GM10248 (cell line): ENCODE measurements at regions of chr11 and their contacts with region 1.

Region 1: DNA sequence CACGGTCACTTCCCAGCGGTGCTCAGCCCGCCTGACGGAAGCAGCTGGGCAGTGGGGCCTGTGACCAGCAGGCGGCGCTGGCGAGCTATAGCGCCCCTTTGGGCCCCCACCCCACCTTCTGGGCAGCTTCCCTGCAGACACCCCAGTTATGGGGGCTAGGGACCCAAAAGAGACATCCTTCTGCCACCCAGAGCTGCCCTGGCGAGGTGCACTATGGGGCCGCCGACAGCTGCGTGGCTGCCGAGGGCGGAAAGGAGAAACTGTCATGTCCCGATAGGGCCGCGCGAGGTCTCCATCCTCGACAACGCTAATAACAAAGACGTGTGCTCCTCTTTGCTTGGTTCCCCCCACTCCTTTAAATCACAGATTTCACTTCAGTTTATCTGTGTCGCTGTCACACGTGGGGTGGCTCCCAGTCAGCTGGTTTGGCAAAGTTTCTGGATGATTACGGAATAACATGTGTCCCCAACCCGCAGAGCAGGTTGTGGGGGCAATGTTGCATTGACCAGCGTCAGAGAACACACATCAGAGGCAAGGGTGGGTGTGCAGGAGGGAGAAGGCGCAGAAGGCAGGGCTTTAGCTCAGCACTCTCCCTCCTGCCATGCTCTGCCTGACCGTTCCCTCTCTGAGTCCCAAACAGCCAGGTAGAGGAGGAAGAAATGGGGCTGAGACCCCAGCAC is 674 bp upstream of the MYO7A start:
- DNase-seq: peak; percentile 78
- CTCF ChIP-seq: peak; percentile 98

Region 2: DNA sequence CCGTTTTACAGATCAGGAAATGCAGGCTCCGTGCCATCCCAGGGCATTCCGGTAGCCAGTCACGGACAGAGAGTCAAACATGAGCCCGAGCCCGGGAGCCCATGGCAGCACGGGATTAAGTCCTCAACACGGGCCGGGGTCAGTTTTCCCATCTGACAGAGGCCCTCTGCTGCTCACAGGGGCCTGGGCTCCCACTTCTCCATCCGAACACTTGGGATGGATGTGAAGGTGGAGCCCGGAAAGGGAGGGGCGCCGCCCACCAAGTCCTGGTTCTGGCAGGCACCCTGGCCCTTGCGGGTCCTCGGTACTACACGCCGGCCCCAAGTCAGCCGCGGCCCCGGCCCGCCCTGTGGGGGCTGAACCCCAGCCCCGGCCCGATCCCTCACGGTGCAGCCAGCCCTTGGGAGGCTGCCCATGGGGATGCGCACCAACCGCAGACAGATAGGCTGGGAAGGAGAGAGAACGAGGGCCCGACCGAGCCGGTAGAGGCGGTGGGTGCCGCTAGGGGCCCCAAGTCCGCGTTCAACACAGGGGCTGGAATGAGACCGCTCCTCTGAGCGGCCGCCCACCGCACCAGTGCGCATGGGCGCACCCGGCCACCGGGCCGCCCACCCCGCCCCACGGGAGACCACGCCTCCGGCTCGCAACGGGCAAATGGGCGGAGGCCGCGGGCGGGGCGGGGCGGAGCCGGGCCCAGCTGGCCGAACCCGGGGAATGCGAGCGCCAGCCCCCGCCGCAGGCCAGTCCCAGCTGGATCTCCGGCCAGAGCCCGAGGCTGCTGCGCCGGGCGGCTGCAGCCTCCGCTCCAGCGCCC is 60.9 kb before region 1 on chr11 and contains the start of gene CAPN5:
- CTCF ChIA-PET with region 1: no interaction called
- POLR2A ChIA-PET with region 1: no interaction called
- DNase-seq: peak; percentile 97
- CTCF ChIP-seq: peak; percentile 3

Region 3: DNA sequence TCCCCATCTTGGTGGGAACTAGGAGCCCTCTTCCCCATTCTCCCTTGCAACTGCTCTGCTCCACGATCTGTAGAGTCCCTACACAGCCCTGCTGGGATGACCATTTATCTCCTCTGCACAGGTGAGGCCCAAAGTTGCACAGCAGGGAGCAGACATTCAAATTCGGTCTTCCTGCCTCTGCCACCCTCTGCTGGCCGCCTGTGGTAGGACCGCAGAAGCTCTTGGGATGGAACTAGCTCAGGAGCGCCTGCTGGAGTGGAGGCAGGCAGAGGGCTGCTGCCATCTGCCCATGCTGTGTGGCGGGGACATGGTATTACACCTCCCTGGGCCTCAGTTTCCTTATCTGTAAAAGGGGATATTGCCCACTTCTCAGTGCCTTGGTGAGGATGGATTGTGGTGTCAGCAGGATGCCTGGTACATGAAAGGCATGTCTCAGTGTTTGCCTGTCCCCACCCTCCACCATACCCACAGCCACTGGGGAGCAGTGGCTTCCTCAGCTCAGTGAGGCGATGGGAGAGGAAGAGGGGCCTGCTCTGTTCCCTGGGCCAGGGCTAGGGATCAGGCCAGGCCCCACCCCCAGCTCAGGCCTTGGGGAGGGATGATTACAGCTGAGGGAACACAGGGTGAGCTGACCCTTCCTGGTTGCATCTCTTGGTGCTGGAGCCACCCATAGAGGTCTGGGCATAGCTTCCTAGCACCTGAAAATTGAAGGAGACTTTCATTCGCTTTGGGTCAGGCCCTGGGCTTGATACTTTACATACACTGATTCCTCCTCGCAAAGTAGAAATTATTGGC is 36.0 kb before region 1 on chr11:
- CTCF ChIA-PET with region 1: interaction called, 14 read pairs
- POLR2A ChIA-PET with region 1: no interaction called
- DNase-seq: peak; percentile 91
- CTCF ChIP-seq: peak; percentile 98

Region 4: GRCh38 chr11:77113382-77114088 is 13.8 kb before region 1 on chr11:
- CTCF ChIA-PET with region 1: interaction called, 57 read pairs
- POLR2A ChIA-PET with region 1: no interaction called
- DNase-seq: peak; percentile 53
- CTCF ChIP-seq: no peak

Region 5: GRCh38 chr11:77147668-77148321 is 20.4 kb after region 1 on chr11:
- CTCF ChIA-PET with region 1: interaction called, 16 read pairs
- POLR2A ChIA-PET with region 1: no interaction called
- DNase-seq: no peak
- CTCF ChIP-seq: no peak

Region 6: DNA sequence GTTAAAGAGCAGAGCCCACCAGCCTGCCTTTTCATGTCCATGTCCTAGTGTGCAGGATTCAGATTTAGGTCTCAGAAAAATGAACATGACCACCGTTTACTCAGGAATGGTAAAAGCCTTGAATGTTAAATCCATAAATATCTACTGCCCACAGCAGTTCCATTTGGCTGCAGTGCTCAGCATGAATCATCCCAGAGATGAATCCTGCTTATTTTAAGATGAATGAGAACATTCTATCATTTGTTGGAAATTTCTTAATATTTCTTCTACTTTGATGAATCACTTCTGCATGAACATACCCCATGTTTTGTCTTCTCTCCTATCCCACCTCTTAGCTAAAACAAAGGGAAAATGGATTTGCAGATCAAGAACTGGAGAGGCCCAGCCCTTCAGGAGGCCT is 414.9 kb after region 1 on chr11:
- CTCF ChIA-PET with region 1: interaction called, 12 read pairs
- POLR2A ChIA-PET with region 1: no interaction called
- DNase-seq: no peak
- CTCF ChIP-seq: no peak

Region 7: DNA sequence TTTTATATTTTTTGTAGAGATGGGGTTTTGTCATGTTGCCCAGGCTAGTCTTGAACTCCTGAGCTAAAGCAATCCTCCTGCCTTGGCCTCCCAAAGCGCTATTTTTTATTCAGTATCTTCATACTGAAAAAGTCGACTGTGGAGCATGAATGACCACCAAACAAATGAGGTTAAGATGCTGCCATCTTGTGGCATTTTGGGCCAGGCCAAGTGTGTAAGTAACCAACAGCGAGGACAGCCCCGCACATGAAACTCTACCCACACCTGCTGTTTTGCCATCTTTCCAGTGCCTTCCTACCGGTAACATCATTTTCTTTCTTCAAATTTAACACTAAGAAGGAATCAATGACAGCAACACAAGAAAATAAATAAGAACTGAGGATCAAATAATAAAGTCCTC is 430.2 kb after region 1 on chr11:
- CTCF ChIA-PET with region 1: interaction called, 12 read pairs
- POLR2A ChIA-PET with region 1: no interaction called
- DNase-seq: no peak
- CTCF ChIP-seq: no peak